A549 (cell line): ENCODE measurements at regions of chr7 and their contacts with region 1.

Region 1: GRCh38 chr7:10939911-10940703 is 33.6 kb upstream of the PHF14 start:
- DNase-seq: peak; percentile 96
- ATAC-seq: peak; percentile 95 to 98
- H3K4me3 ChIP-seq: peak overlapping the region; percentile 72
- H3K27ac ChIP-seq: peak overlapping the region; percentile 88 to 91
- H3K4me1 ChIP-seq: peaks cover 15% of the 10 kb centered on the region; the same call in 2 of the 3 replicates
- CTCF ChIP-seq: no peak
- EP300 ChIP-seq: no peak
- POLR2A ChIP-seq: peak; percentile 94
- RAD21 ChIP-seq: no peak

Region 2: GRCh38 chr7:10724449-10724848 is 215.7 kb before region 1 on chr7:
- CTCF ChIA-PET with region 1: no interaction called
- POLR2A ChIA-PET with region 1: no interaction called
- DNase-seq: no peak
- ATAC-seq: no peak
- H3K4me3 ChIP-seq: no peak overlapping the region
- H3K27ac ChIP-seq: no peak overlapping the region
- H3K4me1 ChIP-seq: no peaks in the 10 kb centered on the region
- CTCF ChIP-seq: no peak
- EP300 ChIP-seq: no peak
- POLR2A ChIP-seq: no peak
- RAD21 ChIP-seq: no peak

Region 3: DNA sequence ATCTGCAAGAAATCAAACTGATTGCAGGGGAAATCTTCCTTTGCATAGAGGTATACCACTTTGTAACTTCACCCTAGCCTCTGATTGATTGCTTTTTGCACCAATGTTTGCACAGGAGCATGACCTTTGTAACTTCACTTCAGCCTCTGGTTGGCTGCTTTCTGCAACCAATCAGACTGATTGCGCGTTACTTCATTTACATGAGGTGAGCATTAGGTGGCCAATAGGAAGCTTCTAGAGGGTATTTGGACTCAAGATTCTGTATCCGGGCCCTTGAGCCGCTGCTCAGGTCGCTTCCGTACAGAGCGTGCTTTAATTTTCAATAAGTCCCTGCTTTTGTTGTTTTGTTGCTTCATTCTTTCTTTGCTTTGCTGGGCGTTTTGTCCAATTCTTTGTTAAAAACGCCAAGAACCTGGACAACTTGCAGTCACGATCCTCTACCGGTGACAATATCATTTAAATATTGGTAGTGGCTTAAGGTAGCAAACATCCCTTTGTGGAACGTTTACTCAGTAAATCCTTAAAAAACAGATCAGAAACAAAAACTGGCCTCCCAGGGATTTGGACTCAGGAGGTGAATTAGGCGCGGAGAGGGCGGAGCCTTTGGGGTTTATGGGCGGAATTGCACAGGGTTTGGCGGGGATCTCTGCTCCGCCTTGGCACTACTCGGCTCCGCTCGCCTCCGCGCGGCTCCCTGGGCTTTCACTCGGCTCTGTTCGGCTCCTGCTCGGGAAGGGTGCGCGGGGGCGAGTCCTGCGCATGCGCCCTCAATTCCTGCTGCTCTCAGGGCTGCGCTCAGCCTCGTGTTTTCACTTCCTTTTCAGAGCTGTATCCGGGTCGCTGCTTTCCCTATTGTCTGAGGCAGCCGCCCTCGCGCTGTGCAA is 33.2 kb after region 1 on chr7 and contains the start of gene PHF14:
- CTCF ChIA-PET with region 1: interaction called, 5 read pairs
- POLR2A ChIA-PET with region 1: interaction called, 64 read pairs
- DNase-seq: peak; percentile 87 to 98
- ATAC-seq: peak; percentile 98
- H3K4me3 ChIP-seq: peak within 1 kb of the TSS; percentile 58
- H3K27ac ChIP-seq: peak within 1 kb of the TSS; percentile 85 to 97
- H3K4me1 ChIP-seq: peaks cover 18% of the 10 kb centered on the region
- CTCF ChIP-seq: no peak
- EP300 ChIP-seq: no peak
- POLR2A ChIP-seq: peak; percentile 88
- RAD21 ChIP-seq: 0 out of 5 replicates have a peak, but pooled peaks of 1 of the 2 experiments have one; percentile 6
- polyA plus RNA-seq, gene PHF14: 34.2 and 48.0 TPM in 2 replicates

Region 4: DNA sequence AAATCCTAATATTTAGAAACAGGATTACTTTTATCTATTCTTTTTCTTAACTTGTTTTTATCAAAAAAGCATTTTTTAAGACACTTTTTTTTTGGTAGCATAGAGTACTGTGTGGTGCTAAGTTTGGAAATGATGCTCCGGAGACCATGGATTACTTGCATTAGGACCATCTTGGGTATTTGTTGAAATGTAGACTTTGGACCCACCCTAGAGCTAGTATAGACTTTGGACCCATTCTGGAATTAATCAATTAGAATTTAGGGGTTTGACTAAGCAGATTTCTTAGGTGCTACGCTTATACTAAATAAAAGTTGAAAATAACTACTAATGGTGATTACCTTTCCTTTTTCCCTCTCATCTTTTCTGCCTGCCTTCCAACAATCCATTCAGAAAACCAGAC is 113.9 kb after region 1 on chr7:
- CTCF ChIA-PET with region 1: no interaction called
- POLR2A ChIA-PET with region 1: no interaction called
- DNase-seq: no peak
- ATAC-seq: no peak
- H3K4me3 ChIP-seq: no peak overlapping the region
- H3K27ac ChIP-seq: no peak overlapping the region
- H3K4me1 ChIP-seq: no peaks in the 10 kb centered on the region
- CTCF ChIP-seq: no peak
- EP300 ChIP-seq: no peak
- POLR2A ChIP-seq: no peak
- RAD21 ChIP-seq: no peak